Caco-2 (cell line): ENCODE measurements at regions of chr11 and their contacts with region 1.

Region 1: GRCh38 chr11:93344855-93345333 is 14.4 kb downstream of the DEUP1 start:
- DNase-seq: peak in 1 of 2 experiments; percentile 16
- H3K4me3 ChIP-seq: no peak overlapping the region
- H3K4me3 Mint-ChIP-seq: no peak overlapping the region
- H3K27ac Mint-ChIP-seq: no peak overlapping the region
- H3K4me1 ChIP-seq: no peaks in the 10 kb centered on the region
- H3K4me1 Mint-ChIP-seq: peaks cover 8% of the 10 kb centered on the region
- H3K27me3 ChIP-seq: no peaks in the 10 kb centered on the region
- H3K27me3 Mint-ChIP-seq: peaks cover 4% of the 10 kb centered on the region
- CTCF ChIP-seq: no peak

Region 2: DNA sequence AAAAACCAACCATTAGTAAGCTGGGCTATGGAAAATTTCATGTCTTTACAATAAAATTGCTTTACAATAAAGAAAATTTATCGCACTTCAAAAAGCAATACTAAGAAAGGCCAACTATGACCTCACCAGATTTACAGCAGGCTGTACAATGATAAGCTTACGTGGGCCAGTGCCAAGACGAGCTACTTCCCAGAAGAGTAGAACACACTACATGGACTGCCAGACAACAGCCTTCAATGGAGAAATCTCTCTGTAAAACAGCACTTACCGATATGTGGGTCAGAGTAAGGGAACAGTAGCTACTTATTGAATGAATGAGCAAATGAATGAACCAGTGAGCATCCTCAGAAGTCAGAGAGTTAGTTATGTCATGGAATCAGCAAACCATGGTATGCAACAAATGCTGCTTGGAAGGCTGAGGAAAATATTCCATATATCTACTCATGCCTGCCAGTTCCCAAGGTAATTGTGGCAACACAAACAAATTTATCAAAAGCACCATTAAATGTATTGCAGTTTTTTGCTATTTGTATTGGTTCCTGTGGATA is 221.5 kb before region 1 on chr11:
- CTCF ChIA-PET with region 1: no interaction called
- POLR2A ChIA-PET with region 1: no interaction called
- intact Hi-C with region 1: no loop called
- DNase-seq: no peak
- H3K4me3 ChIP-seq: no peak overlapping the region
- H3K4me3 Mint-ChIP-seq: no peak overlapping the region
- H3K27ac Mint-ChIP-seq: no peak overlapping the region
- H3K4me1 ChIP-seq: no peaks in the 10 kb centered on the region
- H3K4me1 Mint-ChIP-seq: no peaks in the 10 kb centered on the region
- H3K27me3 ChIP-seq: no peaks in the 10 kb centered on the region
- H3K27me3 Mint-ChIP-seq: peaks cover 5% of the 10 kb centered on the region
- CTCF ChIP-seq: no peak

Region 3: GRCh38 chr11:93303689-93304088 is 41.2 kb before region 1 on chr11:
- CTCF ChIA-PET with region 1: no interaction called
- POLR2A ChIA-PET with region 1: no interaction called
- intact Hi-C with region 1: loop called (anchors 1 kb)
- DNase-seq: no peak
- H3K4me3 ChIP-seq: no peak overlapping the region
- H3K4me3 Mint-ChIP-seq: no peak overlapping the region
- H3K27ac Mint-ChIP-seq: no peak overlapping the region
- H3K4me1 ChIP-seq: no peaks in the 10 kb centered on the region
- H3K4me1 Mint-ChIP-seq: no peaks in the 10 kb centered on the region
- H3K27me3 ChIP-seq: no peaks in the 10 kb centered on the region
- H3K27me3 Mint-ChIP-seq: peaks cover 22% of the 10 kb centered on the region
- CTCF ChIP-seq: no peak

Region 4: GRCh38 chr11:93370260-93370659 is 25.4 kb after region 1 on chr11:
- CTCF ChIA-PET with region 1: no interaction called
- POLR2A ChIA-PET with region 1: no interaction called
- intact Hi-C with region 1: no loop called
- DNase-seq: peak in 1 of 2 experiments; percentile 37
- H3K4me3 ChIP-seq: no peak overlapping the region
- H3K4me3 Mint-ChIP-seq: no peak overlapping the region
- H3K27ac Mint-ChIP-seq: peak overlapping the region; percentile 5
- H3K4me1 ChIP-seq: peaks cover 7% of the 10 kb centered on the region; the same call in 1 of the 2 replicates
- H3K4me1 Mint-ChIP-seq: peaks cover 13% of the 10 kb centered on the region
- H3K27me3 ChIP-seq: no peaks in the 10 kb centered on the region
- H3K27me3 Mint-ChIP-seq: no peaks in the 10 kb centered on the region
- CTCF ChIP-seq: no peak